Right ventricle myocardium inferior (tissue), 1 donor: ENCODE measurements at regions of chr7 and their contacts with region 1.

Region 1: GRCh38 chr7:1059200-1060091 is 15.1 kb downstream of the GPR146 start:
- DNase-seq: peak; percentile 68
- ATAC-seq: peak; percentile 15

Region 2: DNA sequence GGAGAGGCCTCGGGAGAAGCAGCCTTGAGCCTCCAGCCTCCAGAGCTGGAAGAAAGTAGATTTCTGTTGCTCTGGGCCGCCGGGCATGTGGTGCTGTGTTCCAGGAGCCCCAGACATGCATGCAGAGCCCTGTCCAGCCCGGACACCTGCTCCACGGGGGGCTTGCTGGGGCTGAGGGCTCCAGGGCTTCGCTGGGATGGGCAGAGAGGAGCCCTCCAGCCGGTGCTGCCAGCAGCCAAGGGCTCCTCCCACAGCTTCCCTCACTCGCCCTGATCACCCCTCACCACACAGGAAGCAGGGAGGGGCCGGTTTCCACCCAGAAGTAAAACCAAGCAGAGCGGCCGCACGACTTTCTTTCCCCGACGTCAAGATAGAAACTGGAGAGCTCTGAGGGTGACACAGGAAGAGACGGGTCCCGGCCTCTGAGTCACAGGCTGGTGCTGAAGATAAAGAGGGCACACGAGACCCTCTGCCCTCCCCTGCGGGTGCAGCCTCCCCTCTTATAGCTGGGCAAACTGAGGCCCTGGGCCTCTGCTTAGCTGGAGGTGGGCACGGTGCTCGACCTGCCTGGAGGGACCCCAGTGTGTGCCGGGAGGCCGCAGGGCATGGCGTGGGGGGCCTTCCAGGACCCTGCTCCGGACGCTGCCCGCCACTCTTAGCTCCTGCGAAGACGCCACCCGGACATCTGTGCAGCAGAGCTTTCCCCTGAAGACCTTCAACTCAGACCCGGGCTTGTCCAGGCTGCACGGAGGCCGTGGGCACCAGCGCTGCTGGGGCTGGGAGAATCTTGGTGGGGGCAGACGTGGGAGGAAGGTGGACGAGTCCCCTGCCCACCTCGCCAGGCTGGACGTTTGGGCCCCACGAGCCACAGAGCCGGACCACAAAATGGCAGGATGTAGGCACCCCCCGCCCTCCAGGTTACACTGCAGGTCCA is 136.1 kb before region 1 on chr7:
- intact Hi-C with region 1: no loop called
- DNase-seq: peak; percentile 89
- ATAC-seq: peak; percentile 40

Region 3: GRCh38 chr7:1028031-1028770 is 31.2 kb before region 1 on chr7:
- intact Hi-C with region 1: loop called (anchors 5 kb)
- DNase-seq: peak; percentile 95
- ATAC-seq: peak; percentile 93

Region 4: DNA sequence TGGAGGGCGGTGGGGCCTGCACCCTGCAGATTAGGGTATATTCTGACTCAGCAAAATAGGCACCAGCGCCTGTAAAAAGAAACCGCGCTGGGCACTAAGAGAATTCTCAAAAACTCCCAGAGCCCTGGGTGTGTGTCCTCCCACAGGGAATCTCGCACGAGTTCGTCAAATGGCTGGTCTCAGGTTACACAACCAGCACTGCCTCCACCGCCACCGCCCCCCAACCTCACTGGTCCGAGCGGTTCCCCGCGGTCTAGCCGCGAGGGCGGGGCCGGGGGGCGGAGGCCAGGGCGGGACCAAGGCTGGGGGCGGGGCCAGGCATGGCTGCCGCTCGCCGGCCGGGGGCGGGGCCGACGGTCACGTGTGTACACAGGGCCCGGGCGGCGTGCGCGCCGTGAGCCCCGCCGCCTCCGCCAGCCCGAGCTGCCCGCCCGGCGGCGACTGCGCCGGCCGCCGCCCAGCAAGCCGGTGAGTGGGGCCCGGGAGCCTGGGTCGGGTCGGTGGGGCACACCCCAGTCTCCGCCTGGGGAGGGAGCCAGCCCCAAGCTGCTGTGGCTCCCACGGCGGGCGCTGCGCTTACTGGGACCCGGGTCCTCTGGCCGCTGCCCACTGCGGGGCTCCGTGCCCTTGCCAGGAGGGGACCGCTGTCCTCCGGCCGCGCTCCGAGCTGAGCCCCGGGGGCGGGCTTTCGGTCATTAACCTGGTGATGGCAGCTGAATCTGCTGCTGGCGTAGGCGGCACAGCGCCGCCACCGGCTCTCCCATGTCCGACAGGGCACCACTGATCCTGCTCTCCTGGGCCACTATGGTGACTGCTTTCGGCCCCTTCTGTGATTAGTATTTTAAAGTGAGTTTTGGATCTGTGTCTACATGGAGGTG is 15.0 kb before region 1 on chr7 and contains the start of gene GPR146:
- intact Hi-C with region 1: loop called (anchors 2 kb)
- DNase-seq: peak; percentile 99
- ATAC-seq: peak; percentile 97
- total RNA-seq, gene GPR146: 30.6 TPM

Region 5: DNA sequence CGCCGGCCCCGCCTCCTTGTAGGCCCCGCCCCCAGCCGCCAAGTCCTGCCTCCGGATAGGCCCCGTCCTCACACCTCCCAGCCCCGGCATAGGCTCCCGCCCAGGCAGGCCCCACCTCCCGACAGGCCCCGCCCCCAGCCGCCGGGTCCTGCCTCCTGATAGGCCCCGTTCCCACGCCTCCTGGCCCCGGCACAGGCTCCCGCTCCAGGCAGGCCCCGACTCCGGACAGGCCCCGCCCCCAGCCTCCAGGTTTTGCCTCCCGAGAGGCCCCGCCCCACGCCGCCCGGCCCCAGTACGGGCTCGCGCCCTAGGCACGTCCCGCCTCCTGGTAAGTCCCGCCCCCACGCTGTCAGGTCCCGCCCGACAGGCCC is 400.1 kb after region 1 on chr7:
- intact Hi-C with region 1: loop called (anchors 10 kb)
- DNase-seq: peak; percentile 100
- ATAC-seq: peak; percentile 96

Region 6: GRCh38 chr7:1669954-1670893 is 610.8 kb after region 1 on chr7 and contains the start of gene ELFN1:
- intact Hi-C with region 1: no loop called
- DNase-seq: peak; percentile 73
- ATAC-seq: peak; percentile 14
- total RNA-seq, gene ELFN1: 10.7 TPM